WTC11 (cell line): ENCODE measurements at regions of chr6 and their contacts with region 1.

Region 1: GRCh38 chr6:3977875-3978711 is 100.8 kb downstream of the FAM217A start:
- DNase-seq: peak; percentile 33
- ATAC-seq: peak; percentile 99
- H3K4me3 Mint-ChIP-seq: no peak overlapping the region
- H3K27ac Mint-ChIP-seq: no peak overlapping the region
- H3K4me1 Mint-ChIP-seq: peaks cover 17% of the 10 kb centered on the region
- H3K27me3 Mint-ChIP-seq: no peaks in the 10 kb centered on the region
- CTCF ChIP-seq: peak; percentile 38

Region 2: GRCh38 chr6:3751730-3752542 is 226.2 kb before region 1 on chr6:
- CTCF ChIA-PET with region 1: interaction called, 35 read pairs
- POLR2A ChIA-PET with region 1: no interaction called
- DNase-seq: peak; percentile 79
- ATAC-seq: peak; percentile 40
- H3K4me3 Mint-ChIP-seq: peak overlapping the region; percentile 62
- H3K27ac Mint-ChIP-seq: no peak overlapping the region
- H3K4me1 Mint-ChIP-seq: peaks cover 56% of the 10 kb centered on the region
- H3K27me3 Mint-ChIP-seq: peaks cover 57% of the 10 kb centered on the region
- CTCF ChIP-seq: no peak; the same call in 1 of the 2 replicates

Region 3: GRCh38 chr6:3894590-3895311 is 83.3 kb before region 1 on chr6:
- CTCF ChIA-PET with region 1: interaction called, 14 read pairs
- POLR2A ChIA-PET with region 1: no interaction called
- DNase-seq: no peak
- ATAC-seq: peak; percentile 59
- H3K4me3 Mint-ChIP-seq: peak overlapping the region; percentile 1
- H3K27ac Mint-ChIP-seq: peak overlapping the region; percentile 43; the same call in 1 of the 2 replicates
- H3K4me1 Mint-ChIP-seq: peaks cover 42% of the 10 kb centered on the region
- H3K27me3 Mint-ChIP-seq: peaks cover 7% of the 10 kb centered on the region
- CTCF ChIP-seq: no peak

Region 4: GRCh38 chr6:3948866-3949265 is 29.2 kb before region 1 on chr6:
- CTCF ChIA-PET with region 1: interaction called, 15 read pairs
- POLR2A ChIA-PET with region 1: no interaction called
- DNase-seq: no peak
- ATAC-seq: no peak
- H3K4me3 Mint-ChIP-seq: no peak overlapping the region
- H3K27ac Mint-ChIP-seq: no peak overlapping the region
- H3K4me1 Mint-ChIP-seq: peaks cover 22% of the 10 kb centered on the region
- H3K27me3 Mint-ChIP-seq: no peaks in the 10 kb centered on the region; the same call in 1 of the 2 replicates
- CTCF ChIP-seq: no peak

Region 5: GRCh38 chr6:3990692-3991501 is 12.8 kb after region 1 on chr6:
- CTCF ChIA-PET with region 1: interaction called, 39 read pairs
- POLR2A ChIA-PET with region 1: no interaction called
- DNase-seq: peak; percentile 90
- ATAC-seq: peak; percentile 94
- H3K4me3 Mint-ChIP-seq: peak overlapping the region; percentile 29
- H3K27ac Mint-ChIP-seq: peak overlapping the region; percentile 42
- H3K4me1 Mint-ChIP-seq: peaks cover 44% of the 10 kb centered on the region
- H3K27me3 Mint-ChIP-seq: no peaks in the 10 kb centered on the region
- CTCF ChIP-seq: peak; percentile 78

Region 6: DNA sequence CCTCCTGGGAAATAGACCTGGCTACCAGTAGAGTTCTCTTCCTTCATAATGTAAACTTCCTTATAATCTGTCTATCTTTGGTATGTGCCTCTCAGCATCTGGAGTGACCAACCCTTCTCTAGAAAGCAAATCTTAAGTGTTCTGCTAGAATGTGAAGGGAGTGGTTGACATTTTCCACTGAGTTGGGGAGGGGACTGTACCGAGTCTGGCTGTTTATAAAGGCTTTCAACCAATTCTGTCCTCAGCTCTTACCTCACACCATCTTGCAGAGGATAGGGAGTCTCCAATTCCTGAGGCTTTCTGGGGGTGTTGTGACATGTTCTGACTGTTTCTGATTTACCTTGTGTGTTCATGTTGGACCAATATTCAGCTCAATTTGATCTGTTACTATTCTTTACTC is 61.3 kb after region 1 on chr6:
- CTCF ChIA-PET with region 1: no interaction called
- POLR2A ChIA-PET with region 1: no interaction called
- DNase-seq: no peak
- ATAC-seq: no peak
- H3K4me3 Mint-ChIP-seq: no peak overlapping the region
- H3K27ac Mint-ChIP-seq: 0 out of 2 replicates have a peak overlapping the region, but pooled peaks have one; percentile 49
- H3K4me1 Mint-ChIP-seq: no peaks in the 10 kb centered on the region
- H3K27me3 Mint-ChIP-seq: no peaks in the 10 kb centered on the region
- CTCF ChIP-seq: no peak